ENCODE measurements at regions of chr11 and their contacts with region 1.

Region 1: DNA sequence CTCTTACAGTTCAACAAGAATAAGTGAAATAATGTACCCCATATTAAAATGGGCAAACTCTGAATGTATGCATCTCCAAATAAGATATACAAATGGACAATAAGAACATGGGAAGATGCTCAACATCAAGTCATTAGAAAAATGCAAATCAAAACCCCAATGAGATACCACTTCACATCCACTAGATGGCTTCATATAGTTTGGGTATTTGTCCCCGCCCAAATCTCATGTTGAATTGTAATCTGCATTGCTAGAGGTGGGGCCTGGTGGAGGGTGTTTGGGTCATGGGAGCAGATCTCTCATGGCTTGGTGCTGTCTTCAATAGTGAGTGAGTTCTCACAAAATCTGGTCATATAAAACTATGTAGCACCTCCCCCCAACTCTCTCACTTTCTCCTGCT is 5.7 kb downstream of the MPZL2 start:
- DNase-seq: no peak
- H3K4me3 Mint-ChIP-seq: no peak overlapping the region
- H3K27ac Mint-ChIP-seq: no peak overlapping the region
- H3K4me1 Mint-ChIP-seq: peaks cover 29% of the 10 kb centered on the region
- H3K27me3 Mint-ChIP-seq: no peaks in the 10 kb centered on the region

Region 2: DNA sequence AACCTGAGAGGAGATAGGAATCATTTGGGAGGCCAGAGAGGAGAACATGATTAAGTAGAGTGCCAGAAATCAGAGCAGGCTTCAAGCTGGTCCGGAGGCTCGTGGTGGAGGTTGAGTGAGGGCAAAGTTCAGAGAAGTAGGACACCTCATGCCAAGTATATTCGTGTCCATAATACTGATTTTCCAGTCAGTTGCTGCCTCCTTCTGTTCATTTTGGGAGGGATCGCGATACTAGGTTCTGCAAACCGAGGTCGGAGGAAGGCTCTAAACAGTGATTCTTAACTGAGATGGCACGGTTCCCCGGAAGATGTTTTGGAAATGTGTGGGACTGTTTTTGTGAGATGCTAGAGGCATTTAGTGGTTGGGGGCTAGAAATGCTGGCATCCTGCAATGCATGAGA is 32.5 kb after region 1 on chr11:
- CTCF ChIA-PET with region 1: interaction called, 5 read pairs
- intact Hi-C with region 1: loop called (anchors 1 kb)
- DNase-seq: peak; percentile 74
- H3K4me3 Mint-ChIP-seq: no peak overlapping the region
- H3K27ac Mint-ChIP-seq: no peak overlapping the region
- H3K4me1 Mint-ChIP-seq: peaks cover 28% of the 10 kb centered on the region
- H3K27me3 Mint-ChIP-seq: no peaks in the 10 kb centered on the region

Measured in activated naive CD4-positive, alpha-beta T cell treated with anti-CD3 and anti-CD28 coated beads for 36 hours (primary cell).